WTC11 (cell line): ENCODE measurements at regions of chr10 and their contacts with region 1.

Region 1: GRCh38 chr10:97714048-97714371 is 480 bp downstream of the MARVELD1 start:
- DNase-seq: peak; percentile 67
- ATAC-seq: peak; percentile 14
- H3K4me3 Mint-ChIP-seq: peak overlapping the region; percentile 98
- H3K27ac Mint-ChIP-seq: peak overlapping the region; percentile 97
- H3K4me1 Mint-ChIP-seq: peaks cover 52% of the 10 kb centered on the region
- H3K27me3 Mint-ChIP-seq: peaks cover 3% of the 10 kb centered on the region; the same call in 1 of the 2 replicates
- CTCF ChIP-seq: no peak

Region 2: GRCh38 chr10:97676770-97677581 is 37.0 kb before region 1 on chr10:
- CTCF ChIA-PET with region 1: interaction called, 20 read pairs
- POLR2A ChIA-PET with region 1: no interaction called
- DNase-seq: peak; percentile 48
- ATAC-seq: peak; percentile 93
- H3K4me3 Mint-ChIP-seq: no peak overlapping the region
- H3K27ac Mint-ChIP-seq: no peak overlapping the region
- H3K4me1 Mint-ChIP-seq: no peaks in the 10 kb centered on the region
- H3K27me3 Mint-ChIP-seq: no peaks in the 10 kb centered on the region
- CTCF ChIP-seq: peak; percentile 87

Region 3: GRCh38 chr10:97701438-97702069 is 12.5 kb before region 1 on chr10:
- CTCF ChIA-PET with region 1: interaction called, 45 read pairs
- POLR2A ChIA-PET with region 1: interaction called, 4 read pairs
- DNase-seq: peak; percentile 44
- ATAC-seq: peak; percentile 96
- H3K4me3 Mint-ChIP-seq: no peak overlapping the region
- H3K27ac Mint-ChIP-seq: no peak overlapping the region
- H3K4me1 Mint-ChIP-seq: peaks cover 7% of the 10 kb centered on the region
- H3K27me3 Mint-ChIP-seq: peaks cover 10% of the 10 kb centered on the region
- CTCF ChIP-seq: peak; percentile 64; the same call in 1 of the 2 replicates

Region 4: DNA sequence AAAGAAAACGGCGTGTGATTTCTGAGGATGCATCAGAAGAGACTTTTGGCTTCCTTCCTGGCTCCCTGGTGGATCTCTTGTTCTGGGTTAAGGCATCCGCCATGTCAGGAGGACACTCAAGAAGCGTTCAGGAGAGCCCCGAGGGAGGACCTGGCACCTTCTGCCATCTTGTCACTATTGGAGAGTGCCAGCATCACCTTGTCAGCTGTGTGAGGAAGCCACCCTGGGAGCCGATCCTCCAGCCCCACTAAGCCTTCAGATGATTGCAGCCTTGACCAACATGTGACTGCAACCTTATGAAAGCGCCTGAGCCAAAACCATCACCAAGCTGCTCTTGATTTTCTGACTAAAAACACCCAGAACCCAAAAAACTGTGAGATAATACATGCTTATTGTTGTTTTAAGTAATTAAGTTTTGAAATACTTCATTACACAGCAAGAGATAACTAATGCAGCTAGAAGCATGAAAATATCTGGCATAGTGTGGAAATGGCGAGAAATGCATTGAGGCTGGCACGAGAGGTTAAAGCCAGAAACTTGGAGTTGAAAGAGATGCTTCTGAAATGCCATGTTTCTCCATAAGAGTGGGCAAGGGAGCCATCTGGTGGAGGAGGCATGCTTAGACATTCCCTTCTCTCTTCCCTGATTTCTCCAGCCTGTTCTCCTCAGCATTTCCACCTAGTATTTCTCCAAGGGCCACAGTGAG is 17.5 kb after region 1 on chr10:
- CTCF ChIA-PET with region 1: interaction called, 68 read pairs
- POLR2A ChIA-PET with region 1: interaction called, 9 read pairs
- DNase-seq: peak; percentile 71
- ATAC-seq: peak; percentile 88
- H3K4me3 Mint-ChIP-seq: no peak overlapping the region
- H3K27ac Mint-ChIP-seq: no peak overlapping the region
- H3K4me1 Mint-ChIP-seq: peaks cover 5% of the 10 kb centered on the region
- H3K27me3 Mint-ChIP-seq: peaks cover 33% of the 10 kb centered on the region
- CTCF ChIP-seq: peak; percentile 56

Region 5: GRCh38 chr10:97759158-97759887 is 45.3 kb after region 1 on chr10:
- CTCF ChIA-PET with region 1: interaction called, 10 read pairs
- POLR2A ChIA-PET with region 1: no interaction called
- DNase-seq: peak; percentile 90
- ATAC-seq: peak; percentile 90
- H3K4me3 Mint-ChIP-seq: no peak overlapping the region
- H3K27ac Mint-ChIP-seq: peak overlapping the region; percentile 53; the same call in 1 of the 2 replicates
- H3K4me1 Mint-ChIP-seq: peaks cover 14% of the 10 kb centered on the region
- H3K27me3 Mint-ChIP-seq: no peaks in the 10 kb centered on the region
- CTCF ChIP-seq: peak; percentile 76

Region 6: GRCh38 chr10:97843281-97843671 is 129.3 kb after region 1 on chr10:
- CTCF ChIA-PET with region 1: no interaction called
- POLR2A ChIA-PET with region 1: no interaction called
- DNase-seq: no peak
- ATAC-seq: no peak
- H3K4me3 Mint-ChIP-seq: no peak overlapping the region
- H3K27ac Mint-ChIP-seq: no peak overlapping the region
- H3K4me1 Mint-ChIP-seq: no peaks in the 10 kb centered on the region
- H3K27me3 Mint-ChIP-seq: peaks cover 6% of the 10 kb centered on the region
- CTCF ChIP-seq: no peak